ENCODE measurements at regions of chr4 and their contacts with region 1.

Region 1: DNA sequence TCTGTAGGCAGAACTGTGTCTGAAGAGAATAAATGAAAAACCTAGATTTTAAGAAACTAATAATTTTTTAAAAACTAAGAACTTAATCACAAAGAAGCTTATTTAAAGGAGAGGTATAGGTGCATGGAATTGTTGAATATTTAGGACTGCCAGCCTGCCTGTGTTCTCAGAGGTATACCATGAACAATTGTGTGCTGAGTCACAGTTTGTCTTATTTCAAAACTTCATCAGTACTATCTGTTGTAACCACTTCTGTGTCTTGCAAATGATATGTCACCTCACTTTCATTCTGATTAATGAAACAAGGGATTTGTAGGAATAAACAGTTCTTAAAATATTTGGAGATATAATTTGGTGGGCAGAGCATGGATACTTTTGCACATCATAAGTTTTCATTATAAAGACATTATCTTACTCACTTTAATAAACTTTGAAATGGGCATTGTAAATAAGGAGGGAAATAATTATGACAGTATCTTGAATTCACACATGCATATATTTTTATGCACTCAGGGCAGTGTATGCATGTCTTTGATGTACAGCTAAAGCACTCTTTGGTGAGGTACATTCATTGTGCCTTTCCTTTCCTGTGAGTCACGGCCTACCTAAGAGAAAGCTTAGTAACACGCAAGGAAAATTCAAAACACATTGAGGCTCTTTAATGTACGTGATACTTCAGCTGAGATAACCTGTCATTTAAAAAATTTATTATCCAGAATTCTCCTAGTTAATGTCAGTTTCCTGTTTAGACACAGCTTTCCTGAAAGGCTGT is 31.7 kb downstream of the STOX2 start:
- DNase-seq: no peak
- H3K4me3 ChIP-seq: no peak overlapping the region
- H3K27ac ChIP-seq: no peak overlapping the region
- H3K4me1 ChIP-seq: no peaks in the 10 kb centered on the region
- H3K27me3 ChIP-seq: no peaks in the 10 kb centered on the region
- CTCF ChIP-seq: no peak

Region 2: DNA sequence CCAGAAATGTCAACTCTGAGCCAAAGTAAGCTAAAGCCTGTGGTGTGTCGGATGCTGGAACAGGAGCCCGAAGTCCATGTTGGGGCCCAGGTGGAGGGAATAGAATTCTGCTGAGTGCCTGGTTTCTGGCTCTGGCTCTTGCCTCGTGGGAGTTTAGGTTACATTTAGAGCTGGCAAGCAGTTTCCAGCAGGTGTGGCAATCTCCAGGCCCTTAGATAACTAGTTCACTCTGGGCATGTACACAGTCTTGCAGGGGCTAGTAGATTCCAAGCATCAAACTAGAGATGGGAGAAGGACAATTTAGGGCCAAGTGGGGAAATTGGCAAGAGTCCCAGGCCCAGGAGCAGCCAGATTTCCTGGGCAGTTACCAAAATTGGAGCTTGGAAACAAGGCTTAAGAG is 88.0 kb before region 1 on chr4:
- intact Hi-C with region 1: no loop called
- DNase-seq: no peak
- H3K4me3 ChIP-seq: no peak overlapping the region
- H3K27ac ChIP-seq: no peak overlapping the region
- H3K4me1 ChIP-seq: peaks cover 0 to 8% (median 4%) of the 10 kb centered on the region in 4 donors
- H3K27me3 ChIP-seq: peaks cover 0 to 2% of the 10 kb centered on the region in 2 donors
- CTCF ChIP-seq: no peak

Region 3: DNA sequence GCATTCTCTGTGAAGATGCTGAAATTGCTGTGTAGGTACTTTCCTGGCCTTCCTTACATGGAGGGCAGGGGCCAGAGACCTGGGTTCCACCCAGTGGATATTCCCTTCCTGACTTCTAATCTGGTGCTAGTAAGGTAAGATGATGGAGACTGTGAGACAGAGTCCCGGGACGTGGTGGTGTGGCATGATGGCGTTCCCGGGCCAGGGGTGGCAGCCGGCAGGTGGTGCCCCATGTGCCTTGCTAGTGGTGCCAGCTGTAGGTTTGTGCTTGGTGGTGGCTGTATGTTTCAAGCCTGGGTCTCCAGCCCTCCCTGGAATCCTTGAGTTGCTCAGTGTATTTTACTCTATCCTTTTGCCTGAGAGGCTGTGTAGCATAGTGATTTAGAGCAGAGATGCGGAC is 20.8 kb before region 1 on chr4:
- intact Hi-C with region 1: loop called (anchors 2 kb)
- DNase-seq: no peak
- H3K4me3 ChIP-seq: no peak overlapping the region
- H3K27ac ChIP-seq: no peak overlapping the region
- H3K4me1 ChIP-seq: no peaks in the 10 kb centered on the region
- H3K27me3 ChIP-seq: no peaks in the 10 kb centered on the region
- CTCF ChIP-seq: no peak

Region 4: GRCh38 chr4:183984566-183984965 is 47.8 kb after region 1 on chr4:
- intact Hi-C with region 1: no loop called
- DNase-seq: no peak
- H3K4me3 ChIP-seq: no peak overlapping the region
- H3K27ac ChIP-seq: no peak overlapping the region
- H3K4me1 ChIP-seq: peaks cover 0 to 27% (median 17%) of the 10 kb centered on the region in 4 donors
- H3K27me3 ChIP-seq: no peaks in the 10 kb centered on the region
- CTCF ChIP-seq: no peak